H1 (cell line): ENCODE measurements at regions of chr10 and their contacts with region 1.

Region 1: DNA sequence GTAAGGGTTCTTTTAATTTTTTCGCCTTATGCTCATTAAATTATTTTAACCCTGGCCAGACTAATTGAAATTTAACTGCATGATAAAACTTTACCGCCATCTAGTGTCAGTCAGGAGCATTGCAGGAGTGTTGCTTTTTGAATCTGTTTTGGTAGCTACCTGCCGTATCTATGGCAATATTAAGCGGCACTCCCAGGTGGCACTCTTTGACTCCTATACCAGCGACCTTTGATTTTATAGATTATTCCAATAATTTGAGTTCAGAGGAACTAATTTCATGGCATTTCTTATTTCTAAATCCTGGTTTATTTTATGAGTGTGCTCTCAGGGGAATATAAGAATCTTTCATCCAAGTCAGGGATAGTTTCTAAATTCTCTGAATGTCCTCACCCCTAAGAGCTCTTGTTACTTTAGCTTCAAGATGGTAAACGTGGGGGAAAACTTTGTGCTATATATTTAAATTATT is 198.9 kb downstream of the REEP3 start:
- DNase-seq: peak in 1 of 2 experiments; percentile 71
- H3K4me3 ChIP-seq: no peak overlapping the region
- H3K27ac ChIP-seq: no peak overlapping the region
- H3K4me1 ChIP-seq: peaks cover 0 to 11% (median 3%) of the 10 kb centered on the region in 4 experiments; a peak in 3 of 7 replicates
- H3K27me3 ChIP-seq: no peaks in the 10 kb centered on the region
- CTCF ChIP-seq: peak in 2 of 3 experiments; percentile 76 to 84; a peak in 3 of 4 replicates
- EP300 ChIP-seq: no peak
- POLR2A ChIP-seq: no peak
- RAD21 ChIP-seq: peak; percentile 92 to 95

Region 2: GRCh38 chr10:63166742-63167258 is 553.3 kb before region 1 on chr10:
- CTCF ChIA-PET with region 1: interaction called, 49 read pairs
- POLR2A ChIA-PET with region 1: interaction called, 6 read pairs
- DNase-seq: no peak
- H3K4me3 ChIP-seq: no peak overlapping the region
- H3K27ac ChIP-seq: no peak overlapping the region
- H3K4me1 ChIP-seq: no peaks in the 10 kb centered on the region
- H3K27me3 ChIP-seq: no peaks in the 10 kb centered on the region
- CTCF ChIP-seq: peak in 2 of 3 experiments; percentile 55 to 72; a peak in 3 of 4 replicates
- EP300 ChIP-seq: no peak
- POLR2A ChIP-seq: peak in 1 of 2 experiments; percentile 57; a peak in 2 of 3 replicates
- RAD21 ChIP-seq: peak; percentile 69 to 72

Region 3: DNA sequence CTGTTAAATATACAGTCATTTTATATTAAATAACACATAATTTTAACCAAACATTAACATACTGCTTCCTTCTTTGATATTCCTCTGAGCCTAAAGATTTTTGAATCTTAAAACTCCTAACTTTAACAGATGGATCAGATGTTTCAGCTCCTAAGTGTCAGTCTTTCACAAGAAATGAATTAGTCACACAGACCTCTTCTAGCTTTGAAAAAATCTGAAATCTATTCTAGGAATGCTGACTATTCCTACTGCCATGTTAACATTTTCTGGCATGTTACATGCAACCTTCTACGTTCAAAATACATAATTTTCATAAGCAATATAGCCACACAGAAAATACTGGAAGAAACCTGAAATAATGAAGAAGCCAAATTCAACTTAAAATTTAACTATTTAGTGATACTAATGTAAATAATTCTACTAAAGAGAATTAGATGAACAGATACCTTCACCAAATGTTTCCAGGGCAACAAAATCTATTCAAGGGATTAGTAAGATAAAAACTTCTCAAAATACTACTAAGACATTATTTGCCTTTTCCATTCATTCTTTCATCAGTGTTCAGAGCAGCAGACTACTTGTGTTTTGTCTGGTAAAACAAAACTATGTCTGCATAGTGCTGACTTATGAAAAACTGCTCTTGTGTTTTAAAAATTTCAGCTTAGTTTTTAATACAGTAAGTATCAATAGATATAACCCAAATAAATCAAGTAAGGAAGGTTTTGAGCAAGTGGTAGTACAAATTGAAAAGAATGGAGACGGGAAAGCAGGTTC is 263.5 kb before region 1 on chr10:
- CTCF ChIA-PET with region 1: no interaction called
- POLR2A ChIA-PET with region 1: no interaction called
- DNase-seq: no peak
- H3K4me3 ChIP-seq: no peak overlapping the region
- H3K27ac ChIP-seq: no peak overlapping the region
- H3K4me1 ChIP-seq: 0 out of 7 replicates have a peak, but pooled peaks cover 0 to 3% (median 0%) of the 10 kb centered on the region in 4 experiments
- H3K27me3 ChIP-seq: no peaks in the 10 kb centered on the region
- CTCF ChIP-seq: no peak
- EP300 ChIP-seq: no peak
- POLR2A ChIP-seq: no peak
- RAD21 ChIP-seq: no peak

Region 4: GRCh38 chr10:63521416-63522276 is 198.5 kb before region 1 on chr10:
- CTCF ChIA-PET with region 1: interaction called, 16 read pairs
- POLR2A ChIA-PET with region 1: interaction called, 5 read pairs
- DNase-seq: peak in 1 of 2 experiments; percentile 85
- H3K4me3 ChIP-seq: peak overlapping the region; percentile 73 to 86 (median 82)
- H3K27ac ChIP-seq: peak overlapping the region; percentile 94
- H3K4me1 ChIP-seq: peaks cover 2 to 12% (median 10%) of the 10 kb centered on the region in 4 experiments; a peak in 4 of 7 replicates
- H3K27me3 ChIP-seq: no peaks in the 10 kb centered on the region
- CTCF ChIP-seq: no peak
- EP300 ChIP-seq: no peak
- POLR2A ChIP-seq: peak; percentile 68 to 93
- RAD21 ChIP-seq: peak in 1 of 2 experiments; percentile 0; a peak in 1 of 4 replicates

Region 5: GRCh38 chr10:63629363-63630084 is 90.6 kb before region 1 on chr10:
- CTCF ChIA-PET with region 1: interaction called, 68 read pairs
- POLR2A ChIA-PET with region 1: interaction called, 34 read pairs
- DNase-seq: peak; percentile 90 to 96
- H3K4me3 ChIP-seq: peak overlapping the region; percentile 60 to 80 (median 72)
- H3K27ac ChIP-seq: peak overlapping the region; percentile 91
- H3K4me1 ChIP-seq: peaks cover 11 to 16% (median 13%) of the 10 kb centered on the region in 4 experiments; a peak in 6 of 7 replicates
- H3K27me3 ChIP-seq: no peaks in the 10 kb centered on the region
- CTCF ChIP-seq: peak; percentile 81 to 96 (median 92)
- EP300 ChIP-seq: peak in 1 of 2 experiments; percentile 5; a peak in 1 of 3 replicates
- POLR2A ChIP-seq: peak in 1 of 2 experiments; percentile 15; a peak in 1 of 3 replicates
- RAD21 ChIP-seq: peak; percentile 94 to 95

Region 6: DNA sequence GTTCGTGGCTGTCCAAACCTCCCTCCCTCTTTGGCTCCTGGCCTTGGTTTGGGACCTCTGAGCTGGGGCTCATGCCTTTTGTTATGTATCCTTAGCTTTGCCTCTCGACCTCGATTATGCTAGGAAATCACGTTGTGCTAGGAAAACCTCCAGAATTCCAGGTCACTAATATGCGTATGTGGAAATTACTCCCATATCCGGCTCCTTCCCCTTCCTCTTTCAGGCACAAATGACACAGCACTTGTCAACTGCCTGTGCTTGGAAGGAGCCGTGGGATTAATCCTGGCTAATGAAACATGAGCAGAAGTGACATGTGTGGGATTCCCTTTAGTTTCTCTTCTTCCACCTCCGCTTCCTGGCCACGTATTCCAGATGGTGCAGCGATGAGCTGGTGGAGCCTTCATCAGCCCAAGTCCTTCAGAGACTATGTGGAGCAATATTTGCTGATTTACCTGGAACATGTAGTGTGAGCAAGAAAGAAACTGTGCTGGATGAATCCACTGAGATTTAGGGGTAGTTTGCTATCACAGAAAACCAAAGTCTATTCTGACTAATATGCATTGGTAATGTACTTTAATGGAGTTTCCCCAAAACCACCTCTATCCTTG is 49.7 kb before region 1 on chr10:
- CTCF ChIA-PET with region 1: interaction called, 12 read pairs
- POLR2A ChIA-PET with region 1: no interaction called
- DNase-seq: no peak
- H3K4me3 ChIP-seq: peak overlapping the region in 1 of 4 experiments; percentile 2; a peak in 1 of 8 replicates
- H3K27ac ChIP-seq: no peak overlapping the region
- H3K4me1 ChIP-seq: peaks cover 3 to 20% (median 17%) of the 10 kb centered on the region in 4 experiments; a peak in 6 of 7 replicates
- H3K27me3 ChIP-seq: no peaks in the 10 kb centered on the region
- CTCF ChIP-seq: no peak
- EP300 ChIP-seq: no peak
- POLR2A ChIP-seq: no peak
- RAD21 ChIP-seq: no peak

Region 7: GRCh38 chr10:63767138-63767801 is 47.2 kb after region 1 on chr10:
- CTCF ChIA-PET with region 1: interaction called, 24 read pairs
- POLR2A ChIA-PET with region 1: no interaction called
- DNase-seq: no peak
- H3K4me3 ChIP-seq: no peak overlapping the region
- H3K27ac ChIP-seq: no peak overlapping the region
- H3K4me1 ChIP-seq: peaks cover 0 to 8% (median 0%) of the 10 kb centered on the region in 4 experiments; a peak in 2 of 7 replicates
- H3K27me3 ChIP-seq: no peaks in the 10 kb centered on the region
- CTCF ChIP-seq: peak in 1 of 3 experiments; percentile 12; a peak in 1 of 4 replicates
- EP300 ChIP-seq: no peak
- POLR2A ChIP-seq: no peak
- RAD21 ChIP-seq: peak in 1 of 2 experiments; percentile 44